ENCODE measurements at regions of chr4 and their contacts with region 1.

Region 1: GRCh38 chr4:40316782-40317635 is 18.1 kb upstream of the CHRNA9 start:
- DNase-seq: peak; percentile 88
- H3K4me3 ChIP-seq: peak overlapping the region; percentile 22 to 40 (median 26)
- H3K27ac ChIP-seq: peak overlapping the region; percentile 99
- H3K4me1 ChIP-seq: peaks cover 39% of the 10 kb centered on the region
- H3K27me3 ChIP-seq: no peaks in the 10 kb centered on the region
- CTCF ChIP-seq: peak; percentile 74 to 79

Region 2: DNA sequence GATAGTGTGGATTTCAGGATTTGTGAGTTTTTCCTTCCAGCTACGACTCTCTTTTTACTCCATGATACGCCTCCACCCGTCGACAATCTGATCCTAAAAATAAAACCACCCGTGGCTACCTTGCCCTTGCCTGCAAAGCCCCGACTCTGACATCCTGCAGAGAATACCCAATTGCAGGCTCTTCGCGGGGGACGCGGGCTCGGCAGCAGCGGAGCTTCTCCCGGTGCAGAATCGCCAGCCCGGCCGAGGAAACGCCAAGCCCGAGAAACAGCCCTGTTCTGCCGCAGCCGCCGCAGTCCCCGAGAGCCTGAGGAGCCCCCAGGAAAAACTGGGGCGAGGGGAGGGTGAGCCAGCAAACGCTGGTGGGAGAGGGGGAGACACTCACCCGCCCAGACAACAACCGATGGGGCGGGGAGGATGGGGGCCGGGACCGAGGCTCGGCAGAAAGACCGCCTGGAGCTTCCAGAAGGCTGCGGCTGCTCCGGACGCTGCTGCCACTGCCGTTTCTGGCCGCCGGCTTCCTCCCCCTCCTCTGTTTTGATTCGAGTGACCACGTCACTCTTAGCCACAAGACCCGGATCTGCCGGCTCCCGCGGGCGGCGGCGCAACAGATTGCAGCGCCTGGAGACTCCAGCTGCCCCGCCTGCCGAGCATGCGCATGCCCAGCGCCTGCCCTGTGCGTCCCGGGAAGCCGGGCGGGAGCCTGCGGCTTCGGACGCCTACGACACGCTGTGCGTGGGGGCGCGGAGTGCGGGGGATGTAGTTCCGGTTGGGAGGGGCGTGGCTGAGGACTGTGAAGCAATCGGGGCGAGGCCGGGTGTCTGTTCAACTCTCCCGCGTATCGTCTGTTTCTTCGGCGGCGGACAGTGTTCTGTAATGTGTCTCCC is 678.4 kb before region 1 on chr4 and contains the start of gene SMIM14:
- CTCF ChIA-PET with region 1: no interaction called
- dilution Hi-C with region 1: no loop called
- in situ Hi-C with region 1: no loop called
- intact Hi-C with region 1: loop called (anchors 5 kb)
- DNase-seq: peak; percentile 98
- H3K4me3 ChIP-seq: peak within 1 kb of the TSS; percentile 66 to 93 (median 76)
- H3K27ac ChIP-seq: peak within 1 kb of the TSS; percentile 98
- H3K4me1 ChIP-seq: peaks cover 23% of the 10 kb centered on the region
- H3K27me3 ChIP-seq: no peaks in the 10 kb centered on the region
- CTCF ChIP-seq: peak in 1 of 2 donors; percentile 14
- total RNA-seq, gene SMIM14: 15.7 to 26.8 TPM

Region 3: DNA sequence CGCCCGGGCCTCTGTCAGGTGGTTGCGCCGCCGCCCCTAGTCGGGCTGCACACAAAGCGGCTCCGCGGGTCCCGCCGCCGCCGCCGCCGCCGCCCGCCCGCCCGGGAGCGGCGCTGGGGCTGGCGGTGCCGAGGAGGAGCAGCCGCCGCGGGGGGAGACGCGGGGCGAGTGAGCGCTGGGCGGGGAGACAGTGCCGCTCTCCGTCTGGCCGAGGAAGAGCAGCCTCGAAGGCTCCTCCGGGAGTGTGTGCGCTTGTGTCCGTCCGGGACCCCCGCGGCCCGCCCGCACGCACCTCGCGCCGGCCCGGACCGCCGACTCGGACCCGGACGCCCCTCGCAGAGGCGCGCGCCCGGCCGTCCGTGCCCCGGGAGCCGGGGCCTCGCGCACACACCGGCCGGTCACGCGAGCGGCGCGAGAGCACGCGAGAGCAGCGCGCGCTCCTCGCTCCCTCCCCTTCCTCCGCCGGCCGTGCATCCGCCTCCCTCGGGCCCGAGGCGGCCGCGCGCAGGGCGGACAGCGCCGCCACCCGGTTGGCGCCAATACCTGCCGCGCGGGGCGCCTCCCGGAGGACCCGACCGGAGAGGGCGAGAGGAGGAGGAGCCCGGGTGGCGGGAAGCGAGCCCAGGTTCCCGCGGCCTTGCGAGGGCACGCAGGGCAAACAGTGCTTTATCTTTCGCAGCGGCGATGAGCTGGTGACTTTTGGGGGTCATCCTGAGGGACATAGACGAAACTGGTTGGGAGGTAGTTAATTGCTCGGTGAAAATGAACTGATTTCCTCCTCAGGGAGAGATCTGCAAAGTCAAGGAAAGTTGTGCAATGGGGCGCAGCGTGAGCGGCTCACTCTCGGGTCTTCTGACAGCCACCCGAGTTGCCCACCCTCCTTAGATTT is 339.3 kb before region 1 on chr4 and contains the start of gene PDS5A:
- CTCF ChIA-PET with region 1: no interaction called
- dilution Hi-C with region 1: no loop called
- in situ Hi-C with region 1: no loop called
- intact Hi-C with region 1: loop called (anchors 5 kb)
- DNase-seq: peak; percentile 94
- H3K4me3 ChIP-seq: peak within 1 kb of the TSS; percentile 85 to 96 (median 87)
- H3K27ac ChIP-seq: peak within 1 kb of the TSS; percentile 80
- H3K4me1 ChIP-seq: peaks cover 10% of the 10 kb centered on the region
- H3K27me3 ChIP-seq: no peaks in the 10 kb centered on the region
- CTCF ChIP-seq: peak; percentile 73 to 83
- total RNA-seq, gene PDS5A: 72.2 to 78.5 TPM

Region 4: GRCh38 chr4:40099010-40099409 is 218.0 kb before region 1 on chr4:
- CTCF ChIA-PET with region 1: no interaction called
- dilution Hi-C with region 1: no loop called
- in situ Hi-C with region 1: no loop called
- intact Hi-C with region 1: no loop called
- DNase-seq: no peak
- H3K4me3 ChIP-seq: no peak overlapping the region
- H3K27ac ChIP-seq: no peak overlapping the region
- H3K4me1 ChIP-seq: no peaks in the 10 kb centered on the region
- H3K27me3 ChIP-seq: no peaks in the 10 kb centered on the region
- CTCF ChIP-seq: no peak

Region 5: DNA sequence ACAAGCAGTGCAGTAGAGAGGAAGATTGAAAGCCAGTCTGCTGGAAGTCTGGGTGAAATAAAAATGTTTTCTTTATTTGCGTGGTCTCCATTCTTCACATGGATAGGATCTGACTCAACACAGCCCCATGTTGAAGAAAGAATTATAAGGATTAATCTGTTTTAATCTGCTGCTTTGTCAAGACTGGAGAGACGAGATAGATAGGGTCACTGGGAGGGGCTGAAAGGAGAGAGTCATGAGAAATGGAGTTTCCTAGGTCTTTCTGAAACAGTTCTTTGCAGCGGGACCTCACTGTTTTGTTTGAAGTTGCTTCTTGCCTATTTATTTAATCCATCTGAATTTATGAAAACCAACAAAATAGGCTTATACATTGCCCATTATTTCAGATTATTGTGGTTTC is 152.6 kb before region 1 on chr4:
- CTCF ChIA-PET with region 1: interaction called, 11 read pairs
- dilution Hi-C with region 1: no loop called
- in situ Hi-C with region 1: loop called (anchors 10 kb)
- intact Hi-C with region 1: no loop called
- DNase-seq: no peak
- H3K4me3 ChIP-seq: no peak overlapping the region
- H3K27ac ChIP-seq: no peak overlapping the region
- H3K4me1 ChIP-seq: no peaks in the 10 kb centered on the region
- H3K27me3 ChIP-seq: no peaks in the 10 kb centered on the region
- CTCF ChIP-seq: no peak

Region 6: GRCh38 chr4:40185830-40186664 is 131.0 kb before region 1 on chr4:
- CTCF ChIA-PET with region 1: no interaction called
- dilution Hi-C with region 1: no loop called
- in situ Hi-C with region 1: no loop called
- intact Hi-C with region 1: loop called (anchors 2 kb)
- DNase-seq: no peak
- H3K4me3 ChIP-seq: no peak overlapping the region
- H3K27ac ChIP-seq: peak overlapping the region; percentile 98
- H3K4me1 ChIP-seq: peaks cover 34% of the 10 kb centered on the region
- H3K27me3 ChIP-seq: no peaks in the 10 kb centered on the region
- CTCF ChIP-seq: no peak